GM12878 (cell line): ENCODE measurements at regions of chr16 and their contacts with region 1.

Region 1: GRCh38 chr16:11232852-11233726 is 22.9 kb downstream of the SOCS1 start:
- DNase-seq: no peak
- ATAC-seq: peak; percentile 86
- H3K4me3 ChIP-seq: no peak overlapping the region
- H3K27ac ChIP-seq: peak overlapping the region; percentile 74
- H3K4me1 ChIP-seq: peaks cover 26% of the 10 kb centered on the region
- H3K27me3 ChIP-seq: no peaks in the 10 kb centered on the region
- CTCF ChIP-seq: no peak; a peak in 1 of 6 replicates
- EP300 ChIP-seq: peak in 1 of 2 experiments; percentile 52; a peak in 1 of 4 replicates
- POLR2A ChIP-seq: peak; percentile 79; the same call in 1 of the 2 replicates
- RAD21 ChIP-seq: peak; percentile 27

Region 2: DNA sequence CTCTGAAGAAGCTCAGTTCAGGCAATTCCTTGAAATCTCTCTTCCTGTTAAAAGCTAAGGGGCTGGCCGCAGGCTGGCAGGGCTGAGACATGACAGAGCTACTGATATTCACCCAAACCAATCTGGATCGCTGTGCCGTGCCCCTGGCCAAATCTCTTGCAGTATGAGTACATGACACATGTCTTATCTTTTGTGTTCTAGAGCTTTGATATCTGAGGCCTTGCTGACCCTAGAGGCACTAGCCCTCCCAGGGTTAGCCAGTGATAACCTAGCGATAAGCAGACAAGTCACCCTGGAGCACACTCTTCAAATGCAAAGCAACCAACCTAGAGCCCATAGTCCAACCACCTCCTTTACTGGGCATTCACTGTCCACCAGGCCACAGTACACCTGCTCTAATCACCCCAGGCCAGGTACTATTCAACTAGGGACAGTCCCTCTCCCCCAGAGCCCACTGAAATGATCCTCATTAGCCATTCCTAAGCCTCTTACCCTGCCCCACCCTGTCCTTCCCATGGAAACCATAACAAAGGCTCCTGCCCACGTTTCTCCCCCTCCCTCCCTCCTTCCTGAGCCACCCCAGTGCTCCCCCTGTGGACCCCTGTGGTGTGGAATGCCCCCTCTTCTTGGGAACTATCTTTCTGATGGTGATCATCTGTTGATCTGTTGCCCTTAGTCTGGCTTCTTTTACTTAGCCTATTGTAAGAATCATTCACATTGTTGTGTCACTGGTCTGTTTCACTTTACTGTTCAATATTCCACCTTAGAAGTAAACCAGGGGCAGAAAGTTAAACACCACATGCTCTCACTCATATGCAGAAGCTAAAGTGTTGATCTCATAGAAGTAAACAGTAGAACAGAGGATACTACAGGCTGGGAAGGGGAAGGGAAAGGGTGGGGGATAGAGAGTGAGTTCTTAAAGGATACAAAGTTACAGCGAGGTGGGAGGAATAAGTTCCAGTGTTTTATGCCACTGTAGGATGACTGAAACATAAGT is 590.8 kb before region 1 on chr16:
- CTCF ChIA-PET with region 1: no interaction called
- POLR2A ChIA-PET with region 1: no interaction called
- RAD21 ChIA-PET with region 1: no interaction called
- SMC1A ChIA-PET with region 1: no interaction called
- in situ Hi-C with region 1: no loop called
- intact Hi-C with region 1: no loop called
- DNase-seq: no peak
- ATAC-seq: no peak
- H3K4me3 ChIP-seq: no peak overlapping the region
- H3K27ac ChIP-seq: no peak overlapping the region
- H3K4me1 ChIP-seq: no peaks in the 10 kb centered on the region
- H3K27me3 ChIP-seq: no peaks in the 10 kb centered on the region; a peak in 1 of 4 replicates
- CTCF ChIP-seq: no peak
- EP300 ChIP-seq: no peak
- POLR2A ChIP-seq: no peak
- RAD21 ChIP-seq: no peak

Region 3: DNA sequence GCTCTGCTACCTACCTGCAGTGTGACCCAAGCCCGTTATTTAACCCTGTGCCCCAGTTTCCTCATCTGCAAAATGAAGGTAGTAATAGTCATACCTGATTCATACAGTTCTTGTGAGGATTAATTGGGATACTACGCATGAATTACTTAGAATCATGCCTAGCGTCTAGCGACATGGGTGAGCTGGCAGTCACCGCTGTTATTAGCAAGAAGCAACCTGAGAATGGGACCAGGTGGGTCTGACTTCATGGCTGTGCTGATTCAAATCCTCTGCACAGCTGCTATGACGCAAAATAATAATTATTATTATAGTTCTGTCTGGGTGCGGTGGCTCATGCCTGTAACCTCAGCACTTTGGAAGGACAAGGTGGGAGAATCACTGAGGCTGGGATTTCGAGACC is 15.0 kb after region 1 on chr16:
- CTCF ChIA-PET with region 1: interaction called, 7 read pairs
- POLR2A ChIA-PET with region 1: interaction called, 12 read pairs
- RAD21 ChIA-PET with region 1: interaction called, 7 read pairs
- SMC1A ChIA-PET with region 1: interaction called, 14 read pairs
- in situ Hi-C with region 1: no loop called
- intact Hi-C with region 1: no loop called
- DNase-seq: no peak
- ATAC-seq: no peak
- H3K4me3 ChIP-seq: no peak overlapping the region
- H3K27ac ChIP-seq: no peak overlapping the region
- H3K4me1 ChIP-seq: peaks cover 21% of the 10 kb centered on the region
- H3K27me3 ChIP-seq: no peaks in the 10 kb centered on the region
- CTCF ChIP-seq: no peak
- EP300 ChIP-seq: no peak
- POLR2A ChIP-seq: no peak
- RAD21 ChIP-seq: no peak